ENCODE measurements at regions of chr4 and their contacts with region 1.

Region 1: DNA sequence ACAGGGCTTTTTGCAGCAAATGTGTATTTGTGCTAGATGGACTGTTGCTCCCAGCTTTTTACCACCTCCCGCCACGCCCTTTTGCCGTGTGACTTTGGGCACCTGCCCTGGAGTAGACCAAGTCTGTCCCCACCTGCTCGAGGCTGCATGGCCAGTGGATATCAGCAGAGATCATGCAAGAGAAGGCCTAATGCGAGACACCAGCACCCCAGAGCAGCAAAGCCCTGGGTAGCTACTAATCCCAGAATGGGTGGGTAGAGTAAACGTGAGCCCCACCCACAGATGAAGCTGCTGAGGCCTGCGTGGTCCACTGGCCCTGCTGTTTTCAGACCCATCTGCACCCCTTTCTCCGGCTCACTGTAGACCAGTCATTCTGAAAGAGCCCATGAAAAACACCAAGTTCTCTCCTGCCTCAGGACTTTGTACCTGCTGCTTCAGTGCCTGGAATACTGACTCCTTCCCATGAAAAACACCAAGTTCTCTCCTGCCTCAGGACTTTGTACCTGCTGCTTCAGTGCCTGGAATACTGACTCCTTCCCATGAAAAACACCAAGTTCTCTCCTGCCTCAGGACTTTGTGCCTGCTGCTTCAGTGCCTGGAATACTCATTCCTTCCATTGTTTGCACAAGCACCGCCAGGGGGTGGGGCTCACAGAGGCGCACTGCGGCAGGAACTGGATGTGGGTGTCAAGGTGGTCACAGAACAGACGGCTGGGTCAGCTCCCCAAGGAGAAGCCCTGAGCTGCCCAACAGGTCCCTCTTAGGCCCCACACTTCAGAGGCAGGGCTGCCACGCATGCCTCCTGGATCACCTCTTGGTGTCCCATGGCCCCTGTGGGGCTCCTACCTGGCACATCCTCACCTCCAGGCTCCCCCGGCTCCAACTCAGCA is 5.1 kb upstream of the TNIP2 start:
- DNase-seq: no peak
- H3K4me3 ChIP-seq: no peak overlapping the region
- H3K4me3 Mint-ChIP-seq: peak overlapping the region in 1 of 8 donors; percentile 17
- H3K27ac ChIP-seq: no peak overlapping the region
- H3K27ac Mint-ChIP-seq: peak overlapping the region in 3 of 7 donors; percentile 37 to 80 (median 60)
- H3K4me1 ChIP-seq: peaks cover 14% of the 10 kb centered on the region
- H3K4me1 Mint-ChIP-seq: peaks cover 0 to 21% (median 9%) of the 10 kb centered on the region in 4 donors
- H3K27me3 ChIP-seq: no peaks in the 10 kb centered on the region
- H3K27me3 Mint-ChIP-seq: no peaks in the 10 kb centered on the region

Region 2: GRCh38 chr4:2552806-2553205 is 208.5 kb before region 1 on chr4:
- CTCF ChIA-PET with region 1: no interaction called
- POLR2A ChIA-PET with region 1: no interaction called
- intact Hi-C with region 1: no loop called
- DNase-seq: no peak
- H3K4me3 ChIP-seq: no peak overlapping the region
- H3K4me3 Mint-ChIP-seq: no peak overlapping the region
- H3K27ac ChIP-seq: no peak overlapping the region
- H3K27ac Mint-ChIP-seq: no peak overlapping the region
- H3K4me1 ChIP-seq: peaks cover 30% of the 10 kb centered on the region
- H3K4me1 Mint-ChIP-seq: peaks cover 14 to 62% (median 28%) of the 10 kb centered on the region in 4 donors
- H3K27me3 ChIP-seq: no peaks in the 10 kb centered on the region
- H3K27me3 Mint-ChIP-seq: no peaks in the 10 kb centered on the region

Region 3: GRCh38 chr4:2574863-2575262 is 186.4 kb before region 1 on chr4:
- CTCF ChIA-PET with region 1: no interaction called
- POLR2A ChIA-PET with region 1: no interaction called
- intact Hi-C with region 1: no loop called
- DNase-seq: no peak
- H3K4me3 ChIP-seq: no peak overlapping the region
- H3K4me3 Mint-ChIP-seq: no peak overlapping the region
- H3K27ac ChIP-seq: no peak overlapping the region
- H3K27ac Mint-ChIP-seq: peak overlapping the region in 3 of 7 donors; percentile 37 to 74 (median 48)
- H3K4me1 ChIP-seq: peaks cover 14% of the 10 kb centered on the region
- H3K4me1 Mint-ChIP-seq: peaks cover 50 to 69% (median 52%) of the 10 kb centered on the region in 4 donors
- H3K27me3 ChIP-seq: no peaks in the 10 kb centered on the region
- H3K27me3 Mint-ChIP-seq: no peaks in the 10 kb centered on the region

Region 4: GRCh38 chr4:2652828-2653227 is 108.5 kb before region 1 on chr4:
- CTCF ChIA-PET with region 1: no interaction called
- POLR2A ChIA-PET with region 1: no interaction called
- intact Hi-C with region 1: no loop called
- DNase-seq: no peak
- H3K4me3 ChIP-seq: no peak overlapping the region
- H3K4me3 Mint-ChIP-seq: no peak overlapping the region
- H3K27ac ChIP-seq: no peak overlapping the region
- H3K27ac Mint-ChIP-seq: peak overlapping the region in 6 of 7 donors; percentile 1 to 80 (median 48)
- H3K4me1 ChIP-seq: peaks cover 8% of the 10 kb centered on the region
- H3K4me1 Mint-ChIP-seq: peaks cover 14 to 19% (median 16%) of the 10 kb centered on the region in 4 donors
- H3K27me3 ChIP-seq: no peaks in the 10 kb centered on the region
- H3K27me3 Mint-ChIP-seq: no peaks in the 10 kb centered on the region

Region 5: DNA sequence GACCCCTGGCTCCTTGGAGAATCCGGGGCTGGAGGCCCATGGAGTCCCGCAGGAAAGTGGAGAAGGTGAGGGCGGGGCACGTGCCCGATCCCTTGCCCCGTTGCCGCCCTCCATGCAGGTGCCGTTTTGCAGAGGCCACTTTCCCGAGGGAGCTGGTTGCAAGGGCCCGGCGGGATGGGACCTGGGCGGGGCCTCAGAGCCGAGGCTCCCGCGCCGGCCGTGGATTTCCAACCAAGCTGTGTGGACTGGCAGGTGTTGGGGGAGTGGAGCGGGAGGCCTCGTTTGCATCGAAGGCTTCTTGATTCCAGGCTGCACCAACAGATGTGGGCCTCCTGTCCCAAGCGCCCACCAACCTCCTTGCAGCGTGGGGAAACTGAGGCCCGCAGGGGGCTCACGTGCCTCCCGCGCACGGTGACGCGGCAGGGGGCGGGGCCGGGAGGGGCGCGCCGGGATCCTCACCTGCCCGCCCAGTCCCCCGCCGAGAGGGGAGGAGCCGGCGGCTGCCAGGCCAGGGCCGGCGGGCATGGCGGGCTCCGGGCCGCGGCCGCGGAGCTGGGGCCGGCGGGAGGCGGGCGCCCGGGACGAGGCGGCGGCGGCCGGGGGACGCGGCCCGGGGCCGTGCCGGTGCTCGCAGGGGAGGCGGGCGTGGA is 56.5 kb after region 1 on chr4:
- CTCF ChIA-PET with region 1: interaction called, 10 read pairs
- POLR2A ChIA-PET with region 1: interaction called, 3 read pairs
- intact Hi-C with region 1: loop called (anchors 10 kb)
- DNase-seq: no peak
- H3K4me3 ChIP-seq: peak overlapping the region in 1 of 2 donors; percentile 13
- H3K4me3 Mint-ChIP-seq: peak overlapping the region; percentile 78 to 91 (median 85)
- H3K27ac ChIP-seq: no peak overlapping the region
- H3K27ac Mint-ChIP-seq: peak overlapping the region in 4 of 7 donors; percentile 23 to 98 (median 88)
- H3K4me1 ChIP-seq: peaks cover 57% of the 10 kb centered on the region
- H3K4me1 Mint-ChIP-seq: peaks cover 33 to 66% (median 52%) of the 10 kb centered on the region in 4 donors
- H3K27me3 ChIP-seq: no peaks in the 10 kb centered on the region
- H3K27me3 Mint-ChIP-seq: no peaks in the 10 kb centered on the region

Region 6: DNA sequence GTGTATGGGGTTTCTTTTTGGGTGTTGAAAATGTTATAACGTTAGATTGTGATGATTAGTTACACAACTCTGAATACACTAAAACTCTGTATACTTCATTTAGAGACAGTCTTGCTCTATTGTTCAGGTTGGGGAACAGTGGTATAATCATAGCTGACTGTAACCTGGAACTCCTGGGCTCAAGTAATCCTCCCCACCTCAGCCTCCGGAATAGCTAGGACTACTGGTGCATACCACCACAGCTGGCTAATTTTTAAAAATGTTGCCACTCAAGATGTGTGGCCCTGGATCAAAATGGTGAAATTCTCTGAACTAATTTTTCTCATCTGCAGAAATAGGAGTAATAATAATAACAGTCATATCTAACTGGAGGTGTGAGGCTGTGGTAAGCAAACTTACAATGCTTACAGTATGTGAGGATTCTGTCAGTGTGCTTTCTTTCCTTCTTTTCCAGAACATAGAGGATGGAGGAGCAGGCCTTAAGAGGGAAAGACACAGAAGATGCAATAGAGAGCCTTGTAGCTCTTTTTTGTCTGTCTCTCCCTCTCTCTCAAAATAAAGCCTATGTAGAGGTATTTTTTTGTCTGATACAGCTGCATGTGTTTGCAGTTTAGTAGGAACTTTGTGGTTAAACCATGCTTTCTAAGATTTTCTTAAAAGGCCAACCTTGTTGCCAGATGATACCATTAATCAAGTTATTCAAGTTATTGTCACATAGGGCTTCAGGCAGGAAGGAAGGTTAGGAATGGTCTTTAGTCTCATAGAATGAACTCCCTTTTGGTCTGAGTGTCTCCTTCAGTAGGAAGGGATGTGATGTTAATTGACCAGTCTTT is 89.9 kb after region 1 on chr4:
- CTCF ChIA-PET with region 1: interaction called, 10 read pairs
- POLR2A ChIA-PET with region 1: interaction called, 4 read pairs
- intact Hi-C with region 1: no loop called
- DNase-seq: no peak
- H3K4me3 ChIP-seq: no peak overlapping the region
- H3K4me3 Mint-ChIP-seq: peak overlapping the region in 5 of 8 donors; percentile 29 to 51 (median 49)
- H3K27ac ChIP-seq: no peak overlapping the region
- H3K27ac Mint-ChIP-seq: peak overlapping the region; percentile 68 to 93 (median 81)
- H3K4me1 ChIP-seq: peaks cover 83% of the 10 kb centered on the region
- H3K4me1 Mint-ChIP-seq: peaks cover 44 to 90% (median 68%) of the 10 kb centered on the region in 4 donors
- H3K27me3 ChIP-seq: no peaks in the 10 kb centered on the region
- H3K27me3 Mint-ChIP-seq: no peaks in the 10 kb centered on the region

Region 7: GRCh38 chr4:2954358-2955185 is 193.3 kb after region 1 on chr4:
- CTCF ChIA-PET with region 1: interaction called, 34 read pairs
- POLR2A ChIA-PET with region 1: interaction called, 4 read pairs
- intact Hi-C with region 1: loop called (anchors 2 kb)
- DNase-seq: peak; percentile 40 to 70 (median 44)
- H3K4me3 ChIP-seq: no peak overlapping the region
- H3K4me3 Mint-ChIP-seq: peak overlapping the region in 4 of 8 donors; percentile 20 to 83 (median 50)
- H3K27ac ChIP-seq: peak overlapping the region; percentile 23
- H3K27ac Mint-ChIP-seq: peak overlapping the region; percentile 83 to 98 (median 92)
- H3K4me1 ChIP-seq: peaks cover 33% of the 10 kb centered on the region
- H3K4me1 Mint-ChIP-seq: peaks cover 25 to 42% (median 34%) of the 10 kb centered on the region in 4 donors
- H3K27me3 ChIP-seq: no peaks in the 10 kb centered on the region
- H3K27me3 Mint-ChIP-seq: no peaks in the 10 kb centered on the region

Region 8: GRCh38 chr4:3037957-3038461 is 276.7 kb after region 1 on chr4:
- CTCF ChIA-PET with region 1: interaction called, 5 read pairs
- POLR2A ChIA-PET with region 1: interaction called, 3 read pairs
- intact Hi-C with region 1: loop called (anchors 1 kb)
- DNase-seq: no peak
- H3K4me3 ChIP-seq: peak overlapping the region in 1 of 2 donors; percentile 10
- H3K4me3 Mint-ChIP-seq: peak overlapping the region; percentile 63 to 86 (median 72)
- H3K27ac ChIP-seq: no peak overlapping the region
- H3K27ac Mint-ChIP-seq: peak overlapping the region in 5 of 7 donors; percentile 5 to 74 (median 47)
- H3K4me1 ChIP-seq: peaks cover 34% of the 10 kb centered on the region
- H3K4me1 Mint-ChIP-seq: peaks cover 15 to 44% (median 31%) of the 10 kb centered on the region in 4 donors
- H3K27me3 ChIP-seq: no peaks in the 10 kb centered on the region
- H3K27me3 Mint-ChIP-seq: peaks cover 1 to 4% of the 10 kb centered on the region in 2 donors